Endothelial cell of umbilical vein (primary cell): ENCODE measurements at regions of chr17 and their contacts with region 1.

Region 1: DNA sequence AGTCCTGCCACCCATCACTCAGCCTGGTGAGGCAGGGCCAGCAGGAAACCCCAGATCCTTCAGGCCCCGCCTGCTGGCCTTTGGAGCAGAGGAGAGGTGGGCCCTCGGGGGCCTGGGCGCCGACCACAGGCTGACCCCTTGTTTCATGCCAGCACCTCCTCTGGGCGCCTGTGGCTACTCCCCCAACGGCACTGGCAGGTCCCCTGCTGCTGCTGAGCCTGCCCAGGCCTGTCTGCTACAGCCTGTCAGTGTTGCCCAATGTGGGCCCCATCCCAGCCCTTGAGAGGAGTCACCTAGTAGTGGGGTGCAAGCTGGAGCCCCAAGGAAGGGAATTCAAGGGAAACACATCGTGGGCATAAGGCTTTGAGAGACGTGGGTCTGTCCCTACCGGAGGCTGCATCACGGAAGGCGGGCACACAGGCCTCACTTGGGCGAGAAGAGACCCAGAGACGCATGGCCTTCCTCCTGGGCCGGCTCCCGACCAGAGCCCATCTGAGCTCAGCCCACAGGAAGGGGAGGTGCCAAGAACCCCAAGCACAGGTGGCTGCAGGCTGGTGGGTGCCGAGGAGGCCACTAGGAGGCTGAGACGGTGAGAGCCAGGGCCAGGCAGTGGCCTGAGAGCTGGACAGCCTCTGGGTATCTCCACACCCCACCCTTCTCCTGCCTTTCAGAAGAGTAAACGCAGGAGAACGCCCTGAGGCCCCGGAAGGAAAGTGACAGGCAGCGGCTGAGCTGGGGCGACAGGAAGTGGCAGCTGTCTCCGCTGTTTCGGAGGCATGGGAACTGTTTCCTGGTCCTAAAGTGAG is 8.0 kb upstream of the FASN start:
- DNase-seq: no peak
- H3K4me3 ChIP-seq: no peak overlapping the region
- H3K27ac ChIP-seq: peak overlapping the region; percentile 9
- H3K4me1 ChIP-seq: peaks cover 10% of the 10 kb centered on the region
- H3K27me3 ChIP-seq: no peaks in the 10 kb centered on the region
- CTCF ChIP-seq: peak; percentile 23 to 35
- POLR2A ChIP-seq: no peak

Region 2: GRCh38 chr17:82153745-82154375 is 47.8 kb after region 1 on chr17:
- CTCF ChIA-PET with region 1: interaction called, 17 read pairs
- POLR2A ChIA-PET with region 1: no interaction called
- dilution Hi-C with region 1: no loop called
- intact Hi-C with region 1: loop called (anchors 1 kb)
- DNase-seq: peak; percentile 56
- H3K4me3 ChIP-seq: no peak overlapping the region
- H3K27ac ChIP-seq: no peak overlapping the region
- H3K4me1 ChIP-seq: no peaks in the 10 kb centered on the region
- H3K27me3 ChIP-seq: no peaks in the 10 kb centered on the region
- CTCF ChIP-seq: peak; percentile 72 to 92
- POLR2A ChIP-seq: no peak